WTC11 (cell line): ENCODE measurements at regions of chr5 and their contacts with region 1.

Region 1: GRCh38 chr5:150449517-150450339 is at the start of gene RPS14:
- DNase-seq: peak; percentile 90
- ATAC-seq: peak; percentile 86
- H3K4me3 Mint-ChIP-seq: peak within 1 kb of the TSS; percentile 100
- H3K27ac Mint-ChIP-seq: peak within 1 kb of the TSS; percentile 99
- H3K4me1 Mint-ChIP-seq: peaks cover 30% of the 10 kb centered on the region
- H3K27me3 Mint-ChIP-seq: no peaks in the 10 kb centered on the region; the same call in 1 of the 2 replicates
- CTCF ChIP-seq: peak; percentile 92
- total RNA-seq, gene RPS14: 2,564 to 2,814 TPM (median 2,812 TPM) in 3 replicates

Region 2: GRCh38 chr5:150143350-150144245 is 306.1 kb before region 1 on chr5:
- CTCF ChIA-PET with region 1: no interaction called
- POLR2A ChIA-PET with region 1: no interaction called
- DNase-seq: no peak
- ATAC-seq: peak; percentile 17
- H3K4me3 Mint-ChIP-seq: no peak overlapping the region
- H3K27ac Mint-ChIP-seq: no peak overlapping the region
- H3K4me1 Mint-ChIP-seq: peaks cover 47% of the 10 kb centered on the region
- H3K27me3 Mint-ChIP-seq: no peaks in the 10 kb centered on the region; the same call in 1 of the 2 replicates
- CTCF ChIP-seq: no peak

Region 3: DNA sequence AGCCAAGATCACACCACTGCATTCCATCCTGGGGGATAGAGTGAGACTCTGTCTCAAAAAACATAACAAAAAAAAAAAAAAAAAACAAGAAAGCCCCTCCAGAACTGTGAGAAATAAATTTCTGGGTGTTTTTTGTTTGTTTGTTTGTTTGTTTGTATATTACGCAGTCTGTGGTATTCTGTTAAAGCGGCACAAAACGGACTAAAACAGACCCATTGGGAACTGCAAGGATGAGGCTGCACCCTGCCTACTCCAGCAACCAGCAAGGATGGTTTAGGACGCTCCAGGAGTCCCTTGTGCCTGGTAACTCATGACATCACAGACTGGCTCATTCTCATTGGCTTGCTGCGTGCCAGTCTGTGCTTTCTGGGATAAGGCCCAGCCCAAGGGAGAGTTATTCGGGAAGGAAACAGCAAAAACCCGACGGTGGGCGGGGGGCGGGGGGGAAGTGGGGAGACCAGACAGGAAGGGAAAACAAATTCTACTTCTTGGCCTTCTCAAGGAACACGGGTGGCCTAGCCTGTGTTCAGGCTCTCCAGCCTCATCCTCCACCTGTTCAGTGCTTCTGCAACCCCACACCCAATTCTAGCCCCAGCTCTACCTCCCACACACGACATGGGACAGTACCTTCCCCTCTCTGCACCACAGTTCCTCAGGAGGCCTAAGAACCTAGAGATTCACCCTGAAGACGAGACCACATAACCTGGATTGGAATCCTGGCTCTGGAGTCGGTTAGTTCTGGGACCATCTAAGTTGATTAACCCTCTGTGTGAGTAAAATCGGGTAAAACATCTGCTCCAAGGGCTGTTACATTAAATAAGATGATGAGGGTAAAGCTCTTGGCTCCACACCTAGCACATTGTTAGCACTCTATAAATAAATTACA is 39.8 kb before region 1 on chr5:
- CTCF ChIA-PET with region 1: interaction called, 11 read pairs
- POLR2A ChIA-PET with region 1: no interaction called
- DNase-seq: peak; percentile 76
- ATAC-seq: peak; percentile 86
- H3K4me3 Mint-ChIP-seq: peak overlapping the region; percentile 60
- H3K27ac Mint-ChIP-seq: peak overlapping the region; percentile 92
- H3K4me1 Mint-ChIP-seq: peaks cover 39% of the 10 kb centered on the region
- H3K27me3 Mint-ChIP-seq: no peaks in the 10 kb centered on the region
- CTCF ChIP-seq: no peak

Region 4: DNA sequence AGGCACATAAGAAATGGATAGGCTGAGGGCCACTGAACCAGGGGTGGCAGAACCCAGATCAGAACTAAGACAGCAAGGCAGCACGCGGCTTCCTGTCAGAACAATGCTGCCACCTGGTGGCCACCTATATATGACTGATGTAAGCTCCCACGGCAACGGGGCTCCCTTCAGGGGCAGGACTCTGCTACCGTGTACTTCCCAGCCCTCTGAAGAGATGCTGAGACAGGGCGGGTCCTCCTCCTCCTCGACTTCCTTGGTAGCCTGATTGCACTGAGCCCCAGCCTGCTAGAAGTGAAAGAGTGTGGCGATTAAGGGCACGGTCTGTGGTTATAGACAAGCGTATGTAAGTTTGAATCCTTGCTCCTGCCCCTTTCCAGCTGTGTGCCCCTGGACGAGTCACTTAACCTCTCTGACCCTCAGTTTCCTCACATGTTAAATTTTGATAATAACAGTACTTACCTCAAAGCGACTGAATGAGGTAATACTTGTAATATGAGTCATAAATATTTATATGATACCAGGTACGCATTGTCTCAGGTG is 13.5 kb before region 1 on chr5:
- CTCF ChIA-PET with region 1: interaction called, 14 read pairs
- POLR2A ChIA-PET with region 1: no interaction called
- DNase-seq: peak; percentile 96
- ATAC-seq: peak; percentile 89
- H3K4me3 Mint-ChIP-seq: no peak overlapping the region
- H3K27ac Mint-ChIP-seq: no peak overlapping the region
- H3K4me1 Mint-ChIP-seq: peaks cover 10% of the 10 kb centered on the region
- H3K27me3 Mint-ChIP-seq: no peaks in the 10 kb centered on the region
- CTCF ChIP-seq: peak; percentile 72

Region 5: GRCh38 chr5:150464554-150465012 is 14.9 kb after region 1 on chr5:
- CTCF ChIA-PET with region 1: interaction called, 24 read pairs
- POLR2A ChIA-PET with region 1: interaction called, 5 read pairs
- DNase-seq: no peak
- ATAC-seq: peak; percentile 66
- H3K4me3 Mint-ChIP-seq: no peak overlapping the region
- H3K27ac Mint-ChIP-seq: peak overlapping the region; percentile 68; the same call in 1 of the 2 replicates
- H3K4me1 Mint-ChIP-seq: peaks cover 45% of the 10 kb centered on the region
- H3K27me3 Mint-ChIP-seq: no peaks in the 10 kb centered on the region
- CTCF ChIP-seq: no peak